ENCODE measurements at regions of chr7 and their contacts with region 1.

Region 1: DNA sequence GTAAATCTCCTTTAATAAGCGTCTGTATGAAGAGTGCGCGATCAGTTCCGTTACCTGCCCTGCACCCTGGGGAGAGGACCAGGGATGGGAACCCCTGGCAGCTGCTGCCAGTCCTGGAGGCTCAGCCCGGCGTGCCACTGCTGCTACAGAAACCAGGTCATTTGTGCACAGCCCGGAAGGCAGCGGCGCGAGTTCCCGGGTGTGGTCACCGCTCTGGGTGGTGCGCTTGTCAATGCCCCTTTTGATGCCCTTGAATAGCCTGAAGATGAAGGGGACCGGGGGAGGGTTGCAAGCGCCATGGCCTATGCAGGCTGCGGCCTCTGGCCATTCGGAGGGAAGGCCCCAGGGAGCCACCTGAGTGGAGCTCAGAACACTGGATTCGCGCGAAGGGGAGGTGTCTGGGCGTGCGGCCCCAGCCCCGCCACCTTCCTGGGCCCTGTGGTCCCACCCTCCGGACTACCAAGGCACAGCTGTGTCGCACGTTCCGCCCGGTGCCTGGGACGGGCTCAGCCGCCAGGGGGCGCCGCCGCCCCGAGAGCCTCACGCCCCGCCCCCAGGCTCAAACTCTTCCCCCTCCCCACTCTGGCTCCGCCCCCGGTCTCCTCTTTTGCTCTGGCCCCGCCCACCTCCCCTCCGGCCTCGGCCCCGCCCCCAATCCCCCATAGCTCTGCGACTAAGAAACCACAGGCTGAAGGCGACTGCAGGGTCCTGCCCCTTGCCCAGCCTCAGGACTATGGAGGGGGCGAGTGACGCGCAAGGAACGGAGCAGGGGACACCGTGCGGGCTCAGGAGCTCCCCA is 16.5 kb downstream of the AP5Z1 start:
- DNase-seq: peak; percentile 79
- H3K4me3 Mint-ChIP-seq: no peak overlapping the region
- H3K27ac Mint-ChIP-seq: no peak overlapping the region
- H3K4me1 Mint-ChIP-seq: peaks cover 13% of the 10 kb centered on the region
- H3K27me3 Mint-ChIP-seq: no peaks in the 10 kb centered on the region

Region 2: GRCh38 chr7:4775250-4775847 is 16.6 kb before region 1 on chr7 and contains the start of gene AP5Z1:
- CTCF ChIA-PET with region 1: interaction called, 20 read pairs
- POLR2A ChIA-PET with region 1: no interaction called
- DNase-seq: peak; percentile 96
- H3K4me3 Mint-ChIP-seq: peak within 1 kb of the TSS; percentile 98
- H3K27ac Mint-ChIP-seq: peak within 1 kb of the TSS; percentile 98
- H3K4me1 Mint-ChIP-seq: peaks cover 40% of the 10 kb centered on the region
- H3K27me3 Mint-ChIP-seq: no peaks in the 10 kb centered on the region
- total RNA-seq, gene AP5Z1: 61.1 to 71.3 TPM